AG04450 (cell line): ENCODE measurements at regions of chr12 and their contacts with region 1.

Region 1: DNA sequence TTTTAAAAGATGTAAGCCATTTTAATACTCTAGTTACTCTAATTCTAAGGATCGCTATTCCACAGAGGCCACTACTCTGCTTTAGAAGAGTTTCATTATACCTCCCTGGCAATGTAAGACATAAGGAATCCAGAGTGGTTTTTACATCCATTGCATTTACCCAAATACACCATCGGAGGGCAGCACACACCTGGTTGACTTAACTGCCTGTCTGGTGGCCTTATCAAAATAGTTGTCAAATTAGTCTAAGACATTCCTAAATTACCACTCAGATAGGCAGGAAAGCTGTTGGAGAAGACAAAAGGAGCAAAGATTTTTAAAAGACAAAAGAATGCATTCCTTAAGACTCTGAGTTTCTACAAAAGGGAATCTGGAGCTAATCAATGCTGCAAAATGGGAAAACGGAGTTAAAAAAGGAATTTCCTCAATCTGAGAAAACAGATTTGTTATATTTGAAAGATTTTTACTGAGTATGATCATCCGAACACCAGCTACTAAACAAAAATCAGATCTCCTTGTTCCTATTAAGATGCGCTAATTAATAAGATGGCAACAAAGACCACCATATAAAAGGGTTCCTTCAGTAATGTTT is 33.8 kb upstream of the FGD4 start:
- DNase-seq: peak; percentile 47
- H3K4me3 ChIP-seq: no peak overlapping the region
- H3K27ac ChIP-seq: no peak overlapping the region
- H3K27me3 ChIP-seq: no peaks in the 10 kb centered on the region
- CTCF ChIP-seq: peak; percentile 80

Region 2: DNA sequence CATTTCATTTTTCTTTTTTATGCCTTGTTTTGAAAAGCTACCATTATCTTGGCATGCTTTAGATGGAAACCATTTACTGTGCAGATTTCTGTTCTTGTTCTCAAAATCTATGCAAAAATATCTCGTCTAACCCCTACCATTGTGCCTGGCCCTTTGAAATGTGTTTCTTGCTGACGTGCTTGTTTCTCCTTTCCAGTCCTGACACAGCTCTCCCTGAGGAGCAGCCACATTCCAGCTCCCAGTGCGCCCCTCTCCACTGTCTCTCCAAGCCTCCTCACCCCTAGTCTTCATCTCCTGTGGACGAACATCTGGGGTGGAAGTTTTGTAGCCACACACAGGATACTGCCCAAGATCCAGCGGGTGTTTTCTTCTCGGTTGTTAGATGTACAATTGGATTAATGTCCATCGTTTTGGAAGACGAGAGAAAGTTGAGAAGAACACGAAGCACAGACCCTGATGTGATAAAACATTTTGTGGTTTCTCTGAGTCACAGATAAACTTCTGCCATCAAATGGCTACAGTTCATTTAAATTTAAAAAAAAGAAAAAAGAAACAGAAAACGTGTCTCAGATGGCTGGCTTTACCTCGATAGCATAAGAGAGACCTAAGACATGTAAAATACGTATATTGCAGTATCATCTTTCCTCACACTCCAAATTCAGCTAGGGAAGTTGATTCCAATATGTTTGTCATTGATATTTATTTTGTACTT is 11.9 kb after region 1 on chr12:
- CTCF ChIA-PET with region 1: interaction called, 15 read pairs
- POLR2A ChIA-PET with region 1: no interaction called
- DNase-seq: no peak
- H3K4me3 ChIP-seq: no peak overlapping the region
- H3K27ac ChIP-seq: no peak overlapping the region
- H3K27me3 ChIP-seq: no peaks in the 10 kb centered on the region
- CTCF ChIP-seq: no peak

Region 3: GRCh38 chr12:32659908-32660440 is 294.4 kb after region 1 on chr12:
- CTCF ChIA-PET with region 1: interaction called, 15 read pairs
- POLR2A ChIA-PET with region 1: no interaction called
- DNase-seq: no peak
- H3K4me3 ChIP-seq: no peak overlapping the region
- H3K27ac ChIP-seq: no peak overlapping the region
- H3K27me3 ChIP-seq: no peaks in the 10 kb centered on the region
- CTCF ChIP-seq: no peak

Region 4: GRCh38 chr12:32671930-32672780 is 306.6 kb after region 1 on chr12:
- CTCF ChIA-PET with region 1: interaction called, 41 read pairs
- POLR2A ChIA-PET with region 1: no interaction called
- DNase-seq: peak; percentile 67
- H3K4me3 ChIP-seq: no peak overlapping the region
- H3K27ac ChIP-seq: no peak overlapping the region
- H3K27me3 ChIP-seq: peaks cover 2% of the 10 kb centered on the region
- CTCF ChIP-seq: peak; percentile 63